ENCODE measurements at regions of chr17 and their contacts with region 1.

Region 1: DNA sequence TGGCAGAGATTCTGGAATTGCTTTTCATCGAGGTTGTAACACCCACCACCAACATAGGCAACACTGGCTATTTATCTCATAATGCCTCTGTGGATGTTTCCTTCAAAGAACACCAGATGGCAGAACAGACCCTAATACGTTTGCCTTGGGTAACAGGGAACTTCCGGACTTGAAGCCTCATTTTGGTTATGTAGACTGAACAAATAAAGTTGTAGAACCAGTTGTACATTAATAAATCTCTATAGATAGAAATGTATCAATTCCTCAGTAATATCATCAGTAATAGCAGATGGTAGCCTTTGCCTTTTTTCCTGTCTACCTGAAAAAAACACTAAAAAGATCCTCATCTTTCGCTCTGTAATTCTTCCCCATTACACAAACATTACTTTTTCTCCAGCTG is 25.9 kb upstream of the APOH start:
- DNase-seq: no peak
- ATAC-seq: peak; percentile 93

Region 2: GRCh38 chr17:66386498-66387365 is 131.6 kb after region 1 on chr17:
- intact Hi-C with region 1: no loop called
- DNase-seq: no peak
- ATAC-seq: peak; percentile 90

Region 3: GRCh38 chr17:66567234-66568170 is 312.4 kb after region 1 on chr17:
- intact Hi-C with region 1: loop called in 1 of 2 experiments (anchors 2 kb)
- DNase-seq: peak; percentile 81 to 92
- ATAC-seq: peak; percentile 96

Region 4: DNA sequence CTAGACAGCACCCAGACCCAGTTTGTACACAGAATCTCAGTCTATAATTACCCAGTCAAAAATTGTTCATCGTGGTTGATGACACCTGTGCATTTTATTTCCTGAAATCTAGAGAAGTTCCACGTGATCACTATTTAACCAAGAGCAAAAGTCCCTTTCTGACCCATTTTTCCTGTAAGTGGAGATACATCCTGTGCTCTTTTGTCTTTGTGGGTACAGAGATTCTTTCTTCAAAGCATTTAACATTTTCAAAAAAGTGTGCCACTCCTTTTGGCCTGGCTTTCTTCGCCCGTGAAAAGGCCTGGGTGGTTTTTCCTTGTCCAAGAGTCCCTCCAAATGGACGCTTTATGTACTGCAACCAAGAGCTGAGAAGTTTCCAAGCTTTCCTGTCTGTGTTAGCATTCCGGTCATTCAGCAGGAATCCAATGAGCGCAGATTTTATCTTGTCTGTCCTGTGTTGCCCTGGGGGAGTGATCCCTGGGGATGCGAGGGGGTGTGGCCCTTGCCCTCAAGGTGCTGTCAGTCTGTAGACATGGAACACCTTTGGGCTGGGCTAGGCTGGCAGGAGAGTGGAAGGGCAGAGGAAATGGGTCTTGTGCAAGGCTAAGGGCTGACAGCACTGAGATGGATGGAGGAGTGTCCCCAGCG is 418.7 kb after region 1 on chr17:
- intact Hi-C with region 1: loop called in 1 of 2 experiments (anchors 5 kb)
- DNase-seq: peak; percentile 41 to 50
- ATAC-seq: peak; percentile 56

Measured in left colon (tissue), 2 donors.